Activated naive CD4-positive, alpha-beta T cell treated with anti-CD3 and anti-CD28 coated beads for 36 hours (primary cell): ENCODE measurements at regions of chr7 and their contacts with region 1.

Region 1: DNA sequence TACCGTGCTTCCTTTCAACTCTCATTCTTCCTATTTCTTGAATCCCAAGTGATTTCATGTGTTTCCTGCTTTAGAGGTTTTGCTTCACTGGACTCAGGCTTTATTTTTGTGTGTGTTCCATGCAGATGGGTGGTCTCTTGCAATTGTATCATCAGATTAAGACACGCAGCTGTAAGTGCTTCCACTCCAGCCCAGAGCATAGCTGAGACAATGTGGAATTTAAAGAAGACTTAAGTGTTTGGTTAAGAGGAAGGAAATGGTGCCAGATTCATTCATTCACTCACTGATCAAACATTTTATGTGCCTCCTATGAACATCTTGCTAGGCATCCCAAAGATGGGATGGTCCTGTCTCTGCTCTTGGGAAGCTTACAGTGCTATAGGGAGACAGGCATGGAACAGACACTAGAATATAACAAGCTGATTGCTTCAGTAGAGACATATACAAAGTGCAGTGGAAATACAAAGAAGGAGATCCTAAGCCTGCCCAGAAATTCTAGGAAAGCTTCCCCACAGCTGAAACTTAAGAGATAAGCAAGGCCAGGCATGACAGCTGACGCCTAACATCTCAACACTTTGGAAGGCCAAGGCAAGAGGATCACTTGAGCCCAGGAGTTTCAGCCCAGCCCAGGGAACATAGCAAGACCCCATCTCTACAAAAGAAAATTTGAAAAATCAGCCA is 46.1 kb upstream of the LRRC17 start:
- DNase-seq: no peak
- H3K4me3 Mint-ChIP-seq: no peak overlapping the region
- H3K27ac Mint-ChIP-seq: no peak overlapping the region
- H3K4me1 Mint-ChIP-seq: no peaks in the 10 kb centered on the region
- H3K27me3 Mint-ChIP-seq: no peaks in the 10 kb centered on the region

Region 2: GRCh38 chr7:102819151-102819550 is 47.5 kb before region 1 on chr7:
- CTCF ChIA-PET with region 1: no interaction called
- intact Hi-C with region 1: loop called (anchors 5 kb)
- DNase-seq: no peak
- H3K4me3 Mint-ChIP-seq: no peak overlapping the region
- H3K27ac Mint-ChIP-seq: no peak overlapping the region
- H3K4me1 Mint-ChIP-seq: peaks cover 2% of the 10 kb centered on the region
- H3K27me3 Mint-ChIP-seq: no peaks in the 10 kb centered on the region